ENCODE measurements at regions of chr5 and their contacts with region 1.

Region 1: GRCh38 chr5:151740336-151740942 is 18.0 kb downstream of the ATOX1 start:
- DNase-seq: peak; percentile 61 to 84 (median 77)
- H3K4me3 ChIP-seq: no peak overlapping the region
- H3K27ac ChIP-seq: no peak overlapping the region
- H3K4me1 ChIP-seq: peaks cover 2 to 18% (median 7%) of the 10 kb centered on the region in 4 experiments
- H3K27me3 ChIP-seq: no peaks in the 10 kb centered on the region

Region 2: GRCh38 chr5:151651997-151652645 is 88.3 kb before region 1 on chr5:
- CTCF ChIA-PET with region 1: interaction called, 173 read pairs
- POLR2A ChIA-PET with region 1: interaction called, 3 read pairs
- DNase-seq: peak; percentile 68 to 79 (median 70)
- H3K4me3 ChIP-seq: no peak overlapping the region
- H3K27ac ChIP-seq: no peak overlapping the region
- H3K4me1 ChIP-seq: no peaks in the 10 kb centered on the region
- H3K27me3 ChIP-seq: no peaks in the 10 kb centered on the region

Region 3: GRCh38 chr5:151659001-151659754 is 81.3 kb before region 1 on chr5:
- CTCF ChIA-PET with region 1: interaction called, 173 read pairs
- POLR2A ChIA-PET with region 1: interaction called, 3 read pairs
- DNase-seq: peak; percentile 70 to 85 (median 74)
- H3K4me3 ChIP-seq: no peak overlapping the region
- H3K27ac ChIP-seq: no peak overlapping the region
- H3K4me1 ChIP-seq: peaks cover 0 to 17% (median 15%) of the 10 kb centered on the region in 4 experiments
- H3K27me3 ChIP-seq: no peaks in the 10 kb centered on the region

Region 4: GRCh38 chr5:151675611-151676313 is 64.7 kb before region 1 on chr5:
- CTCF ChIA-PET with region 1: interaction called, 39 read pairs
- POLR2A ChIA-PET with region 1: no interaction called
- DNase-seq: peak in 2 of 3 donors; percentile 46 to 52
- H3K4me3 ChIP-seq: no peak overlapping the region
- H3K27ac ChIP-seq: no peak overlapping the region
- H3K4me1 ChIP-seq: peaks cover 12 to 41% (median 38%) of the 10 kb centered on the region in 4 experiments
- H3K27me3 ChIP-seq: no peaks in the 10 kb centered on the region

Region 5: GRCh38 chr5:151719228-151720000 is 21.0 kb before region 1 on chr5:
- CTCF ChIA-PET with region 1: interaction called, 13 read pairs
- POLR2A ChIA-PET with region 1: no interaction called
- DNase-seq: peak; percentile 19 to 50 (median 39)
- H3K4me3 ChIP-seq: no peak overlapping the region
- H3K27ac ChIP-seq: no peak overlapping the region
- H3K4me1 ChIP-seq: peaks cover 6 to 18% (median 10%) of the 10 kb centered on the region in 4 experiments
- H3K27me3 ChIP-seq: no peaks in the 10 kb centered on the region

Region 6: GRCh38 chr5:151751091-151751490 is 10.7 kb after region 1 on chr5:
- CTCF ChIA-PET with region 1: interaction called, 57 read pairs
- POLR2A ChIA-PET with region 1: interaction called, 3 read pairs
- DNase-seq: no peak
- H3K4me3 ChIP-seq: no peak overlapping the region
- H3K27ac ChIP-seq: no peak overlapping the region
- H3K4me1 ChIP-seq: peaks cover 4 to 14% (median 7%) of the 10 kb centered on the region in 4 experiments
- H3K27me3 ChIP-seq: no peaks in the 10 kb centered on the region

Region 7: GRCh38 chr5:151771259-151772028 is 31.0 kb after region 1 on chr5 and contains the start of gene G3BP1:
- CTCF ChIA-PET with region 1: interaction called, 11 read pairs
- POLR2A ChIA-PET with region 1: interaction called, 3 read pairs
- DNase-seq: peak; percentile 100
- H3K4me3 ChIP-seq: peak within 1 kb of the TSS; percentile 68 to 98 (median 92)
- H3K27ac ChIP-seq: peak within 1 kb of the TSS; percentile 93 to 96
- H3K4me1 ChIP-seq: peaks cover 15 to 48% (median 33%) of the 10 kb centered on the region in 4 experiments
- H3K27me3 ChIP-seq: no peaks in the 10 kb centered on the region

Measured in common myeloid progenitor, CD34-positive (primary cell).